Activated T-helper 1 cell treated with anti-CD3 and anti-CD28 coated beads, Interleukin-12 subunit alpha, Interleukin-12 subunit beta, Interleukin-2, Interleukin-4 antibody, amounts not matched to agents 30 ng/mL and 10 ng/mL and 1 ng/mL, durations not matched to agents 14 hours and 24 hours and 36 hours (primary cell): ENCODE measurements at regions of chrX and their contacts with region 1.

Region 1: GRCh38 chrX:121160987-121161386 is 113.6 kb downstream of the GLUD2 start:
- DNase-seq: no peak
- H3K4me3 Mint-ChIP-seq: peak overlapping the region; percentile 54
- H3K27ac Mint-ChIP-seq: peak overlapping the region; percentile 86
- H3K4me1 Mint-ChIP-seq: peaks cover 35% of the 10 kb centered on the region
- H3K27me3 Mint-ChIP-seq: peaks cover 2% of the 10 kb centered on the region

Region 2: DNA sequence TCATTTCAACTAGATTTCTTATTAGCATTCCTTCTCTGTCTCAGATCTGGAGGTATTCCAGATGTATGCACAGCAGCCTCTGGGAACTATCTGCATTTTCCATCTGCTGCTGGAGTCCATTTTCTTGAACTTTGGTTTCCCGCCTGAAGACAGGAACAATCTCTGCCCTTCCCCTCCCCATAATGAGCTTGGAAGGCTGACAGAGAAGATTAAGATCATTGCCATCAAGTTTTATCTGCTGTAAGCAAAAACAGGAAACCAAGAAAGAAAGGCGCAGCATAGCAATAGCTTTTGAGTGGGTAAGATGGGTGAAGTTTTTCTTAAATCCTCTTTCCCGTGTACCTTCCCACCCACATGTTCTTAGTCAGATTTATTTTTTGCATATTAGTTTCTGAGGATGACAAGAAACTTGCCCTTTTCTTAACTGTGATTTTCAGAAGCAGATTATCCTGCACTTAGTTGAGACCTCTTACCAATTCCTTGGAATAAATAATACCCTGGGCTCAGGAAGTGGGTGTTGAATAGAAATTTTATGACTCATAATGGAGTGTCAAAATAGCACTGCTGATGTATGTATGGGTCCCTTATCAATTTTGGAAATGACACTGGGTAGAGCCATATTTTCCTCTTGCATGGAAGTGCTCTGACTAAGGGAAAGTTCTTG is 363.7 kb before region 1 on chrX:
- intact Hi-C with region 1: loop called (anchors 1 kb)
- DNase-seq: no peak
- H3K4me3 Mint-ChIP-seq: peak overlapping the region; percentile 23
- H3K27ac Mint-ChIP-seq: peak overlapping the region; percentile 85
- H3K4me1 Mint-ChIP-seq: peaks cover 36% of the 10 kb centered on the region
- H3K27me3 Mint-ChIP-seq: no peaks in the 10 kb centered on the region

Region 3: DNA sequence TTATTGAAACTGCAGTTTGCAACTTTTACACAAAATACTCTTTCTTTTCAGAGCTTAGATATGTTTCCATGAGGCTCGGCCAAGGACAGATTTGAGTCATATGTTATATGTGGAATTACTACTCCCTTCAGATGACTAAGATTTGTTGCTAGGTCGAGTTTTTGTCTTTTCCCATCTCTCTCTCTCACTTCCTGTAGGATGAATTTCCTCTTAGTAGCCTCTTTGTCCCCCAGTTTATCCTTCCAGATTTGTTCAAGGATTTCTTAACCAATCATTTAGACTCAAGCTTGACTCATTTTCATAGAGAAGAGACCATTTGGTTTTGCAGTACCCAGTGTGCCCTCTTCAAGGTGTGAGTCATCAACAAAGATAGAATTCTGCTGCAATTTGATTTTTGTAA is 95.7 kb after region 1 on chrX:
- intact Hi-C with region 1: loop called (anchors 2 kb)
- DNase-seq: no peak
- H3K4me3 Mint-ChIP-seq: no peak overlapping the region
- H3K27ac Mint-ChIP-seq: no peak overlapping the region
- H3K4me1 Mint-ChIP-seq: no peaks in the 10 kb centered on the region
- H3K27me3 Mint-ChIP-seq: no peaks in the 10 kb centered on the region

Region 4: GRCh38 chrX:121322159-121322558 is 161.2 kb after region 1 on chrX:
- intact Hi-C with region 1: no loop called
- DNase-seq: no peak
- H3K4me3 Mint-ChIP-seq: no peak overlapping the region
- H3K27ac Mint-ChIP-seq: no peak overlapping the region
- H3K4me1 Mint-ChIP-seq: no peaks in the 10 kb centered on the region
- H3K27me3 Mint-ChIP-seq: peaks cover 2% of the 10 kb centered on the region

Region 5: GRCh38 chrX:121365572-121366161 is 204.7 kb after region 1 on chrX:
- intact Hi-C with region 1: no loop called
- DNase-seq: no peak
- H3K4me3 Mint-ChIP-seq: no peak overlapping the region
- H3K27ac Mint-ChIP-seq: no peak overlapping the region
- H3K4me1 Mint-ChIP-seq: no peaks in the 10 kb centered on the region
- H3K27me3 Mint-ChIP-seq: no peaks in the 10 kb centered on the region

Region 6: DNA sequence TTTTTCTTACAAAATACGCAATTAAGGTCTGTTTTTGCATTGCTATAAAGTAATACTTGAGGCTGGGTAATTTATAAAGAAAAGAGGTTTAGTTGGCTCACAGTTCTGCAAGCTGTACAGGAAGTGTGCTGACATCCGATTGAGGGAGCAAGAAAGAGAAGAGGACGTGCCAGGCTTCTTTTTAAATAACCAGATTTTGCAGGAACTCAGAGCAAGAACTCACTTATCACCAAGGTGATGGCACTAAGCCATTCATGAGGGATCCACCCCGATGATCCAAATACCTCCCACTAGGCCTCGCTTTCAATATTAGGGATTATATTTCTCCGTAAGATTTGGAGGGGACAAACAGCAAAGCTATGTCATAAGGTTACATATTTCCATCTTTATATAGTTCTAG is 343.2 kb after region 1 on chrX:
- intact Hi-C with region 1: loop called (anchors 10 kb)
- DNase-seq: no peak
- H3K4me3 Mint-ChIP-seq: no peak overlapping the region
- H3K27ac Mint-ChIP-seq: no peak overlapping the region
- H3K4me1 Mint-ChIP-seq: no peaks in the 10 kb centered on the region
- H3K27me3 Mint-ChIP-seq: no peaks in the 10 kb centered on the region